ENCODE measurements at regions of chr1 and their contacts with region 1.

Region 1: GRCh38 chr1:19704247-19705113 is 39.8 kb downstream of the HTR6 start:
- DNase-seq: peak; percentile 33 to 72 (median 63)
- ATAC-seq: peak; percentile 94
- H3K4me3 ChIP-seq: no peak overlapping the region
- H3K4me3 Mint-ChIP-seq: no peak overlapping the region
- H3K27ac ChIP-seq: no peak overlapping the region
- H3K27ac Mint-ChIP-seq: no peak overlapping the region
- H3K4me1 ChIP-seq: peaks cover 4% of the 10 kb centered on the region
- H3K4me1 Mint-ChIP-seq: peaks cover 9% of the 10 kb centered on the region
- H3K27me3 ChIP-seq: no peaks in the 10 kb centered on the region
- H3K27me3 Mint-ChIP-seq: no peaks in the 10 kb centered on the region
- CTCF ChIP-seq: peak; percentile 86

Region 2: GRCh38 chr1:19668893-19669292 is 35.6 kb before region 1 on chr1:
- CTCF ChIA-PET with region 1: interaction called, 364 read pairs
- POLR2A ChIA-PET with region 1: no interaction called
- intact Hi-C with region 1: no loop called
- DNase-seq: no peak
- ATAC-seq: no peak
- H3K4me3 ChIP-seq: no peak overlapping the region
- H3K4me3 Mint-ChIP-seq: no peak overlapping the region
- H3K27ac ChIP-seq: no peak overlapping the region
- H3K27ac Mint-ChIP-seq: no peak overlapping the region
- H3K4me1 ChIP-seq: peaks cover 10% of the 10 kb centered on the region
- H3K4me1 Mint-ChIP-seq: peaks cover 18% of the 10 kb centered on the region
- H3K27me3 ChIP-seq: peaks cover 5 to 11% of the 10 kb centered on the region in 2 experiments
- H3K27me3 Mint-ChIP-seq: peaks cover 18% of the 10 kb centered on the region
- CTCF ChIP-seq: no peak

Region 3: DNA sequence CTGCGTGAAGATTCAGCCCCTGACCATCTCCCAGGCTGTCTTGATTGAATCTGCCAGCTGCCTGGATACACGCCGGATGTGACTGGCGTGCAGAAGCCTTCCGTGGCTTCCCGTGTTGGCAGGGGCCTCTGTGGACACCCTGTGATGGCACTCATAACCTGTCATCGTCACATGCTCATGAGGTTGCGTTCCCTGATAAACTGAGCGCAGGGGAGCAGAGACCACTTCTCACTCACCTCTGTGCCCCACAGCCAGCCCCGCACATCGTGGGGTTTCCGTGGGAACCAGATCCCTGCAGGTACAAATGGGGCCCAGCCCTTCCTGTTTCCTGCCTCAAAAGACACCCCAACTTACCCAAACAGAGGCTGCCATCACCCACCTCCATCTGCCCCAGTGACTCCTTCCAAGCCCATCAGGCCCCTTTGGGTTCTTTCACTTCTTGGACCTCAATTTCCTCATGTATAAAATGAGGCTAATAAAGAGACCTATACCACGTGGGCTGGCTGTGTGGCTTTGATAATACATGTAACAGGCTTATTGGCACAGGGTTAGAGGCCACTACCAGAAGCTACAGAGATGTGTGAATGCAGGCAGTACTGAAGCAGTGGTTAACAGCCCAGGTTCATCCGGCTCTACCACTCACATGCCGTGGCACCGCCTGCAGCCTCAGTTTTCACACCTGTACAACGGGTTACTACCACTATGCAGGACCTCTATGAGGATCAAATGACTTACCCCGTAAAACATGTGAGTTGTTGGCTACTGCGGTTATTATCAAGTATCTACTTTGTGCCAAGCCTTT is 16.2 kb before region 1 on chr1:
- CTCF ChIA-PET with region 1: interaction called, 33 read pairs
- POLR2A ChIA-PET with region 1: interaction called, 3 read pairs
- intact Hi-C with region 1: no loop called
- DNase-seq: peak; percentile 21 to 83 (median 53)
- ATAC-seq: peak; percentile 80
- H3K4me3 ChIP-seq: no peak overlapping the region
- H3K4me3 Mint-ChIP-seq: peak overlapping the region; percentile 66
- H3K27ac ChIP-seq: peak overlapping the region; percentile 43 to 78
- H3K27ac Mint-ChIP-seq: peak overlapping the region; percentile 95
- H3K4me1 ChIP-seq: peaks cover 35% of the 10 kb centered on the region
- H3K4me1 Mint-ChIP-seq: peaks cover 47% of the 10 kb centered on the region
- H3K27me3 ChIP-seq: no peaks in the 10 kb centered on the region
- H3K27me3 Mint-ChIP-seq: no peaks in the 10 kb centered on the region
- CTCF ChIP-seq: no peak

Region 4: DNA sequence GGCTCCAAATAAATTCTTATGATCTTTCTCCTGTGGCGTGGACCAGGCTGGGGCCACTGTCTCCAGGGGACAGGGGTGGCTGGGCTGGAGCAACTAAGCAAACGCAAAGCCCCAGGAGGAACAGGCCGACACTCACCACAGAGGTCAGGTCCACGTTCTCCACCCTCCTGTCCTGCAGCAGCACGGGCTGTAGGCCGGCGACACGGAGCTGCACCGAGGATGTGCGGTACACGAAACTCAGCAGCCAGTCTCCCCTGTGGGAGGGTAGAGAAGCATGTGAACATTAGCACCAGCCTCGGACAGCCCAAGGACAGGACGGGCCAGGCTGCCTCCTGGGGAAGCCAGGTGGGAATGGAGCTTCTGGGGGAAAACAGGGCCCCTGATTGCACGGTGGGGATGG is 10.2 kb before region 1 on chr1:
- CTCF ChIA-PET with region 1: interaction called, 33 read pairs
- POLR2A ChIA-PET with region 1: no interaction called
- intact Hi-C with region 1: no loop called
- DNase-seq: no peak
- ATAC-seq: no peak
- H3K4me3 ChIP-seq: no peak overlapping the region
- H3K4me3 Mint-ChIP-seq: no peak overlapping the region
- H3K27ac ChIP-seq: no peak overlapping the region
- H3K27ac Mint-ChIP-seq: no peak overlapping the region
- H3K4me1 ChIP-seq: peaks cover 8% of the 10 kb centered on the region
- H3K4me1 Mint-ChIP-seq: peaks cover 17% of the 10 kb centered on the region
- H3K27me3 ChIP-seq: no peaks in the 10 kb centered on the region
- H3K27me3 Mint-ChIP-seq: no peaks in the 10 kb centered on the region
- CTCF ChIP-seq: no peak

Region 5: DNA sequence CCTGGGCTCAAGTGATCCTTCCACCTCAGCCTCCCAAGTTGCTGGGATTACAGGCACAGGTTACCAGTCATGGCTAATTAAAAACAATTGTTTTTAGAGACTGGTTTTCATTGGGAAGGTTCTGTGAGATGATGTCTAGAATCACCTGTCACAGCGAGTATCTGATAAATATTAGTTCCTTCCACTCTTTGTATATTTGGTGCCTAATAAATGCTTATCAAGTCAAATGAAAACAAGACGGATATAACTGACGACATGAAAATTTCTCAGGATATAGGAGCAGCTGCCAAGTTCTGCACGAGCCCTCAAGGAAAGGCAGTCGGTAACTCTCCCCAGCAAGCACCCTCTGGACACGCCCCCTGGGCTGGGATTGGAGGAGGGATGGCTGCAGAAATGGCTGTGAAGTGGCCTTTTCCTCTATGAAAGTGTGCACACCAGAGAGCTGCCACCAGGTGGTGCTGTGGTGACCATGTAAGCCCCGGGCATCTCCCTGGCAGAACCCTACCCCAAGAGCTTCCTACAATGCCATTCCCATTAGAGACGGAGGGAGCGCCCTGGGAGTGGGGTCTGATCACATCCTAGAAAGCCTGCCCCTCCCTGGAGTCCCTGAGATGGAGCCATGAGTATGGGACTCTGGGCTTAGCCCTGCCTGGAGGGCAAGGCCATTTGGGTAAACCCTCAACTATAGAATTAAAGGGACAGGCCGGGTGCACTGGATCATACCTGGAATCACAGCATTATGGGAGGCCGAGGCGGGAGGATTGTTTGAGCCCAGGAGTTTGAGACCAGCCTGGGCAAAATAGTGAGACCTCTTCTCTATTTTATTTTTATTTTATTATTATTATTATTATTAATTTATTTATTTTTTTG is 11.1 kb after region 1 on chr1:
- CTCF ChIA-PET with region 1: interaction called, 39 read pairs
- POLR2A ChIA-PET with region 1: no interaction called
- intact Hi-C with region 1: no loop called
- DNase-seq: peak; percentile 54 to 88 (median 81)
- ATAC-seq: peak; percentile 100
- H3K4me3 ChIP-seq: no peak overlapping the region
- H3K4me3 Mint-ChIP-seq: no peak overlapping the region
- H3K27ac ChIP-seq: no peak overlapping the region
- H3K27ac Mint-ChIP-seq: no peak overlapping the region
- H3K4me1 ChIP-seq: no peaks in the 10 kb centered on the region
- H3K4me1 Mint-ChIP-seq: peaks cover 11% of the 10 kb centered on the region
- H3K27me3 ChIP-seq: no peaks in the 10 kb centered on the region
- H3K27me3 Mint-ChIP-seq: no peaks in the 10 kb centered on the region
- CTCF ChIP-seq: peak; percentile 77